ENCODE measurements at regions of chr9 and their contacts with region 1.

Region 1: GRCh38 chr9:134455934-134456739 is 129.9 kb downstream of the RXRA start:
- DNase-seq: peak; percentile 91 to 95 (median 95)
- ATAC-seq: peak; percentile 91
- H3K4me3 ChIP-seq: no peak overlapping the region
- H3K27ac ChIP-seq: peak overlapping the region; percentile 83
- H3K4me1 ChIP-seq: peaks cover 6% of the 10 kb centered on the region
- H3K27me3 ChIP-seq: no peaks in the 10 kb centered on the region

Region 2: GRCh38 chr9:134641173-134641985 is 185.2 kb after region 1 on chr9 and contains the start of gene COL5A1:
- intact Hi-C with region 1: loop called in 2 of 4 experiments (anchors 10 kb)
- DNase-seq: peak; percentile 94 to 97 (median 97)
- ATAC-seq: peak; percentile 93 to 94
- H3K4me3 ChIP-seq: peak within 1 kb of the TSS; percentile 66
- H3K27ac ChIP-seq: peak within 1 kb of the TSS; percentile 49
- H3K4me1 ChIP-seq: peaks cover 4% of the 10 kb centered on the region
- H3K27me3 ChIP-seq: no peaks in the 10 kb centered on the region
- total RNA-seq, gene COL5A1: 16.0 to 35.8 (median 26.1) TPM

Region 3: DNA sequence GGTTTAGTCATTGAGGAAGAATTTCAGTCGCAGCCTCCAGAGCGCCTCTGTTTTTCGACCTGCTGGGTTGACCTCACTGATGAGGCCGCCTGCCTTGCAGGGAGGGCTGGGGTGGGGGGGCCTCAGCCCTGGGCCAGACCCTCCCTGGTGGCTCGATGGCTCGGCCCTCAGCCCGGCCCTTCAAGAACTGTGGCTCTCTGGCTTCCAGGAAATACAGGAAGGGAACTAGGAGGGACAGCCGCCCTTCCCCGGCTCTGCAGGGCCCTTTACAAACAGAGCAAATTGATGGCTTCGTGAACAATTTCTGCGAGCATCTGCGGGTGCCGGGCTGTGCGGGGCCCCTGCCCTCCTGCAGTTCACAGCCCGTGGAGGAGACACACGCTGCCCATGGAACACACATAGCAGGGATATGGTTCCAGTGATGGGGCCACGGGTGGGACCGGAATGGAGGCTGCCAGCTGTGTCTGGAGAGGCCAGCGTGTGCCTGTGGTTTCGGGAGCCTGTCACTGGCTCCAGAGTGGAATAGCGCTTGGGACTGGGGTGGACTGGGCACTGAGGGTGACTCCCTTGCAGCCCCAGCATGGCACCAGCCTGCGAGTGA is 225.0 kb after region 1 on chr9:
- intact Hi-C with region 1: loop called in 1 of 4 experiments (anchors 5 kb)
- DNase-seq: peak; percentile 29 to 77 (median 76)
- ATAC-seq: peak; percentile 10 to 32
- H3K4me3 ChIP-seq: no peak overlapping the region
- H3K27ac ChIP-seq: no peak overlapping the region
- H3K4me1 ChIP-seq: no peaks in the 10 kb centered on the region
- H3K27me3 ChIP-seq: no peaks in the 10 kb centered on the region